HCT116 (cell line): ENCODE measurements at regions of chr12 and their contacts with region 1.

Region 1: DNA sequence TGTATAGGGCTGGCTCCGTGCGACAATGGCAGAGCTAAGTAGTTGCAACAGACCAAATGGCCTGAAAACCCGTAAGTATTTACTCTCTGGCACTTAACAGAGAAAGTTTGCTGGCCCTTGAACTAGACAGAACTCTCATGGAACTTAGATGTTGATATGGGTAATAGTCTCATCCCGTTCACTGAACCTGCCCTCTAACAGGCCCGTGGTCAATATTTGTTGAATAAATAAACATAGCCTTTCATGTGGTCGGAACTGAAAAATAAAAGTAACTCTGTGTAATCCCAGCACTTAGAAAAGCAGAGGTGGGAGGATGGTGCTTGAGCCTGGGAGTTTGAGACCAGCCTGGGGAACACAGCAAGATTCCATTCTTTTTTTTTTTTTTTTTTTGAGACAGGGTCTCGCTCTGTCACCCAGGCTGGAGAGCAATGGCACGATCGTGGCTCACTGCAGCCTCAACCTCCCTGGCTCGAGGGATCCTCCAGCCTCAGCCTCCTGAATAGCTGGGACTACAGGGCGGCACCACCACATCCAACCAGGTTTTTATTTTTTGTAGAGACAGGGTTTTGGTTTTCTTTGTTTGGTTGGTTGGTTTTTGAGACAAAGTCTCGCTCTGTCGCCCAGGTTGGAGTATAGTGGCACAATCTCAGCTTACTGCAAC is 29.7 kb downstream of the KDM2B start:
- DNase-seq: no peak
- ATAC-seq: no peak
- H3K4me3 ChIP-seq: no peak overlapping the region
- H3K27ac ChIP-seq: no peak overlapping the region
- H3K4me1 ChIP-seq: peaks cover 0 to 6% of the 10 kb centered on the region in 2 experiments; a peak in 2 of 4 replicates
- H3K27me3 ChIP-seq: no peaks in the 10 kb centered on the region
- CTCF ChIP-seq: no peak
- POLR2A ChIP-seq: no peak
- RAD21 ChIP-seq: no peak

Region 2: GRCh38 chr12:121472150-121472905 is 78.8 kb before region 1 on chr12:
- CTCF ChIA-PET with region 1: no interaction called
- POLR2A ChIA-PET with region 1: no interaction called
- RAD21 ChIA-PET with region 1: no interaction called
- intact Hi-C with region 1: no loop called
- DNase-seq: no peak
- ATAC-seq: no peak
- H3K4me3 ChIP-seq: no peak overlapping the region
- H3K27ac ChIP-seq: no peak overlapping the region
- H3K4me1 ChIP-seq: peaks cover 4 to 30% of the 10 kb centered on the region in 2 experiments; a peak in 3 of 4 replicates
- H3K27me3 ChIP-seq: no peaks in the 10 kb centered on the region
- CTCF ChIP-seq: no peak
- POLR2A ChIP-seq: no peak
- RAD21 ChIP-seq: no peak

Region 3: GRCh38 chr12:121536899-121537813 is 13.9 kb before region 1 on chr12:
- CTCF ChIA-PET with region 1: interaction called, 10 read pairs
- POLR2A ChIA-PET with region 1: no interaction called
- RAD21 ChIA-PET with region 1: interaction called in 1 of 2 experiments, 4 read pairs
- intact Hi-C with region 1: no loop called
- DNase-seq: no peak
- ATAC-seq: peak; percentile 71
- H3K4me3 ChIP-seq: peak overlapping the region; percentile 46 to 69
- H3K27ac ChIP-seq: peak overlapping the region; percentile 88
- H3K4me1 ChIP-seq: peaks cover 13 to 34% of the 10 kb centered on the region in 2 experiments; a peak in 3 of 4 replicates
- H3K27me3 ChIP-seq: no peaks in the 10 kb centered on the region
- CTCF ChIP-seq: no peak
- POLR2A ChIP-seq: peak; percentile 5
- RAD21 ChIP-seq: no peak

Region 4: DNA sequence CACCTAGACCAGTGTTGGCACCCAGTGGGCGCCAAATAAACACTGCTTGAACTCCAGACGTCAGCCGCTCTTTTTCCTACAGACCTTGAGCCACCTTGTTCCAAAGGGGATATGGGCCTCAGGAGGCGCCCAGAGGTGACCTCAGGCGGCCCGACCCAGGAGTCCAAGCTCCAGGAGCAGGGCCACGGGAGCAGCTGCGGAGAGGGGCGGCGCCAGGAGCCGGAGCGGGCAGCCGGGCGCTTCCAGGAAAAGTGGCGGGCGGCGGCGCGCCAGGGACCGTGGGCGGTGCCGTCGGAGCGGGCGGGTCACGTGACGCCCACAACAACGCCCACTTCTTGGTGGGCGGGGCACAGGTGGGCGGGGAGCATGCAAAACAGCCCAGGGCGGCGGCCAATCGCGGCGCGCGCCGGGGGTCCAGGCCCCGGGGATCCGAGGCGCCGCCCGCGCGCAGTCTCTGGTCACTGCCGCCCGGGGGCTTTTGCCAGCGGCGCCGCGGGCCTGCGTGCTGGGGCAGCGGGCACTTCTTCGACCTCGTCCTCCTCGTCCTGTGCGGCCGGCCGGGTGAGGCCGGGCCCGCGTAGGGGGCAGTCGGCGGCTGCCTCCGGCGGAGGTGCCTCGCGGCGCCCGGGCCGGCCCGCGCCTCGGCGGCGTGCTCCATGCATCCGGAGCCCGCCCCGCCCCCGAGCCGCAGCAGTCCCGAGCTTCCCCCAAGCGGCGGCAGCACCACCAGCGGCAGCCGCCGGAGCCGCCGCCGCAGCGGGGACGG is 75.2 kb after region 1 on chr12 and contains the start of gene ORAI1:
- CTCF ChIA-PET with region 1: interaction called, 27 read pairs
- POLR2A ChIA-PET with region 1: no interaction called
- RAD21 ChIA-PET with region 1: interaction called, 5 to 10 read pairs
- intact Hi-C with region 1: loop called (anchors 1 kb)
- DNase-seq: peak; percentile 83
- ATAC-seq: peak; percentile 79
- H3K4me3 ChIP-seq: peak within 1 kb of the TSS; percentile 86 to 87
- H3K27ac ChIP-seq: peak within 1 kb of the TSS; percentile 79
- H3K4me1 ChIP-seq: peaks cover 30 to 48% of the 10 kb centered on the region in 2 experiments
- H3K27me3 ChIP-seq: no peaks in the 10 kb centered on the region
- CTCF ChIP-seq: no peak
- POLR2A ChIP-seq: no peak
- RAD21 ChIP-seq: no peak
- total RNA-seq, gene ORAI1: 20.2 TPM

Region 5: GRCh38 chr12:121668750-121669520 is 117.8 kb after region 1 on chr12:
- CTCF ChIA-PET with region 1: interaction called, 84 read pairs
- POLR2A ChIA-PET with region 1: interaction called, 9 read pairs
- RAD21 ChIA-PET with region 1: interaction called, 11 to 24 read pairs
- intact Hi-C with region 1: loop called (anchors 1 kb)
- DNase-seq: no peak
- ATAC-seq: no peak
- H3K4me3 ChIP-seq: no peak overlapping the region
- H3K27ac ChIP-seq: no peak overlapping the region
- H3K4me1 ChIP-seq: peaks cover 18 to 32% of the 10 kb centered on the region in 2 experiments
- H3K27me3 ChIP-seq: no peaks in the 10 kb centered on the region
- CTCF ChIP-seq: peak; percentile 54 to 71 (median 66); a peak in 5 of 6 replicates
- POLR2A ChIP-seq: no peak
- RAD21 ChIP-seq: peak; percentile 61

Region 6: GRCh38 chr12:121678716-121679580 is 127.8 kb after region 1 on chr12:
- CTCF ChIA-PET with region 1: interaction called, 50 read pairs
- POLR2A ChIA-PET with region 1: no interaction called
- RAD21 ChIA-PET with region 1: interaction called, 3 to 11 read pairs
- intact Hi-C with region 1: loop called (anchors 1 kb)
- DNase-seq: no peak
- ATAC-seq: no peak
- H3K4me3 ChIP-seq: no peak overlapping the region
- H3K27ac ChIP-seq: no peak overlapping the region
- H3K4me1 ChIP-seq: peaks cover 0 to 3% of the 10 kb centered on the region in 2 experiments; a peak in 1 of 4 replicates
- H3K27me3 ChIP-seq: no peaks in the 10 kb centered on the region
- CTCF ChIP-seq: no peak
- POLR2A ChIP-seq: no peak
- RAD21 ChIP-seq: no peak

Region 7: DNA sequence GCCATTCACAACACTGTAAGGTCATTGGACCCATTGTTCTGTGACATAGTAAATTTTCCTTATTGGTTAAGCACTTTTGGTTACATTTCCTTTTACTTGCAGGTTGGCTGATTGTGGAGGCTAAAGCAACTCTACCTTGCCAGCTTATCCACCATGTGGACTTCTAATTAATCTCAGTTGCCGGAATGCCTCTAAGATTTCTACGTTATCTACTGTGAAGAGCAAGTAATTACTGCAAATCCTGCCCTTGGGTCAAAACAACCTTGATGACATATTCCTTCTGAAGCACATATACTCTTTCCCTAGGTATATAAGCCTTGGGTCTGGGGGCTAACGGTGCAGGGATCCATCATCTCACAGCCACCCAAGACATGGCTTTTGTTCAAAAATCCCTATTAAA is 137.9 kb after region 1 on chr12:
- CTCF ChIA-PET with region 1: interaction called, 38 read pairs
- POLR2A ChIA-PET with region 1: interaction called, 4 read pairs
- RAD21 ChIA-PET with region 1: interaction called in 1 of 2 experiments, 4 read pairs
- intact Hi-C with region 1: no loop called
- DNase-seq: no peak
- ATAC-seq: no peak
- H3K4me3 ChIP-seq: no peak overlapping the region
- H3K27ac ChIP-seq: no peak overlapping the region
- H3K4me1 ChIP-seq: peaks cover 4 to 15% of the 10 kb centered on the region in 2 experiments; a peak in 3 of 4 replicates
- H3K27me3 ChIP-seq: no peaks in the 10 kb centered on the region
- CTCF ChIP-seq: no peak
- POLR2A ChIP-seq: no peak
- RAD21 ChIP-seq: no peak

Region 8: DNA sequence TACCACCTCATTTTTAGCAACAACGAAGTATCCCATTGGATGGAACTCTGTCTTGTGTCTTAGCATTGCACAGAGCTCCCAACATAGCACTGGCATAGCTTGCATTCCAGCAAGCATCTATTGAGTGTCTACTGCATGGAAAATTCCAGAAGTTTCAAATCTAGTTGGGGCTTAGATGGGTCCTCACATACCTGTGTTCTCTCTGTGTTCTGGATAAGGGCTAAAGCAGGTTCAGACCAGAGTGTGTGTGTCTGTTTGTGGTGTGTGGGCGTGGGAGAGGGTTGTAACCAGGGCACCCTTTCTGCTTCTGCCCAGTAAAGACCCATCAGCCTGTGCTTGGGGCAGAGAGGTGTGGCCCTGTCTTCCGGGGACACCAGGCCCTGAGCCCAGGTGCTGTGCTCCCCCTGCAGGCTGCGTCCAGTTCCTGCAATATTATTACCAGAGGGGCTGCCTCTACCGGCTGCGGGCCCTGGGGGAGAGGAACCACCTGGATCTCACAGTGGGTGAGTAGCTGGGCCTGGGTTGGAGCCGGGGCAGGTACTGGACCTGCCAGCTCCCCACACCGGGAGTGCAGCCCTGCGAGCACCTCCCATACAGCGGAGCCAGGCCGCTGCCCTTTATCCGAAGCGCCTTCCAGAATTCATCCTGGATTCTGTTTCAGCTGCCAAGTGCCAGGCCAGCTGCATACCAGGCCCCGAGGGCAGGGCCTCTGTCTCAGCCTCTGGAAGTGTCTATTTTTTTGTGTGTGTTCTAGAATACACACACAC is 222.1 kb after region 1 on chr12:
- CTCF ChIA-PET with region 1: interaction called, 29 read pairs
- POLR2A ChIA-PET with region 1: no interaction called
- RAD21 ChIA-PET with region 1: interaction called in 1 of 2 experiments, 3 read pairs
- intact Hi-C with region 1: loop called (anchors 1 kb)
- DNase-seq: peak; percentile 64
- ATAC-seq: peak; percentile 81
- H3K4me3 ChIP-seq: no peak overlapping the region
- H3K27ac ChIP-seq: peak overlapping the region; percentile 49
- H3K4me1 ChIP-seq: peaks cover 20 to 49% of the 10 kb centered on the region in 2 experiments
- H3K27me3 ChIP-seq: no peaks in the 10 kb centered on the region
- CTCF ChIP-seq: peak; percentile 88 to 95 (median 90)
- POLR2A ChIP-seq: no peak
- RAD21 ChIP-seq: peak; percentile 99